ENCODE measurements at regions of chr14 and their contacts with region 1.

Region 1: DNA sequence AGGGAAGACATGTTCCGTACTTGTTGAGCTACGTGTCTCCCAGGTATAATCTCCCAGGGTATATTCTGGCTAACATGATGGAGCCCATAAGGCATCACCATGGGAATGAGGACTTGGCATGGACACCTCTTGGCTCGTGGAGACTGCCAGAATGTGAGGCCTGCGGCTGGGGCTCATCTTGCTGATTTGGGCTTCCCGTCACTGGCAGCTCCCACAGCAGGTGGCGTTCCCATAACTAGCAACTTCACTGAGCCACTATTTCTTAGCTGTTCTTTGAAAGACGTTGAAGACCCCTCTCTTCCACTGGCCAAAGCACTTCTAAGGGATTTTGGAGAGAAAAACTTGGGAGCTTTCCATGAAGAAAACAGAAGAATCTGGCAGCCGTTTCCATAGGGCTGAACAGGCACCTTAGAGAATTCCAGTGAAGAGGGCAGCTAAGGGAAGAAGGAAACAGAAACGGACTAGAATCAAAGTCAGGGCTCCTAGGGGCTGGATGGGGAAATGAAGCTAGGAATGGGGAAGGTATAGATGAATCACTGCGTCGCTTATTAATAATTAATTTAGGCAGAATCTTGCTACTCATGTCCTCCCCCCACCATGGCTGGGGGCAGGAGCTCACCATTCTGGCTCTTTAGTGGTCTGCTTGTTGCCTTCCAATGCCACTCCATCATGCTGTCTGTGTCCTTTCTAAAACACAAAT is 39.7 kb upstream of the FOS start:
- DNase-seq: no peak
- H3K4me3 ChIP-seq: no peak overlapping the region
- H3K27ac ChIP-seq: no peak overlapping the region
- H3K4me1 ChIP-seq: peaks cover 0 to 20% (median under 1%) of the 10 kb centered on the region in 4 experiments
- H3K27me3 ChIP-seq: no peaks in the 10 kb centered on the region

Region 2: DNA sequence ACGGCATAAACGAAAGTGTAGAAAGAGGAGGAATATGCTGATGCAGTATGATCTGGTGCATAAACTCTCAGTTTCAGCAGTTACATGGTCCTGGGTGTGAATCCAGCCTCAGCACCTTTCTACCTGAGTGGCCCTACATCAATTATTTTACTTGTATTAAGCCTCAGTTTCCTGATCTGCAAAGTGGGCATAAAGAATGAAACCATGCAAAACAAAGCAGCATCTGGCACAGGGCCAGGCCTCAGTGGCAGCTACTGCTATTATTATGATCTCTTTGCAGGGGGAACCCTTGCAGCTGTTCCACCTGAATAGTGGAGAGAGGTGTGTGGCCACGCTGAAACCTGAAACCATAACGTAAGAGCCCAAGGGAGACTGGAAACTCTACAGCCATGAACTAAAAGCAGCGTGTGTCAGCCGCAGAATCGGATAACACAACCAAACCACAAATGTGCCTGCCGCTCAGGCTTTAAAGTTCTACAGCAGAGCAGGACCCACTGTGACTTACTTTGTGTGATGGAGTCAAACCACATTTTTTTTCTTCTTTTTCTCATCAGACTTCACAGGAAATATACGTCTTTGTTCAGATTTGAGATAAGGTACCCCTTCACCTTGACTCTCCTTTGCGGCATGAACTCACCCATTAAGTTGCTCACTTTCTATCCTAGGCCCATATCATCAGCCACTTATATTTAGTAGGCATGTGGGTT is 10.5 kb after region 1 on chr14:
- CTCF ChIA-PET with region 1: interaction called, 10 read pairs
- POLR2A ChIA-PET with region 1: no interaction called
- DNase-seq: peak; percentile 48 to 86 (median 79)
- H3K4me3 ChIP-seq: no peak overlapping the region
- H3K27ac ChIP-seq: no peak overlapping the region
- H3K4me1 ChIP-seq: peaks cover 9 to 46% (median 25%) of the 10 kb centered on the region in 4 experiments
- H3K27me3 ChIP-seq: no peaks in the 10 kb centered on the region